ENCODE measurements at regions of chr1 and their contacts with region 1.

Region 1: GRCh38 chr1:155776404-155776803 is 80.6 kb downstream of the GON4L start:
- DNase-seq: no peak
- ATAC-seq: no peak
- H3K4me3 ChIP-seq: no peak overlapping the region
- H3K27ac ChIP-seq: no peak overlapping the region
- H3K4me1 ChIP-seq: no peaks in the 10 kb centered on the region
- H3K27me3 ChIP-seq: no peaks in the 10 kb centered on the region

Region 2: DNA sequence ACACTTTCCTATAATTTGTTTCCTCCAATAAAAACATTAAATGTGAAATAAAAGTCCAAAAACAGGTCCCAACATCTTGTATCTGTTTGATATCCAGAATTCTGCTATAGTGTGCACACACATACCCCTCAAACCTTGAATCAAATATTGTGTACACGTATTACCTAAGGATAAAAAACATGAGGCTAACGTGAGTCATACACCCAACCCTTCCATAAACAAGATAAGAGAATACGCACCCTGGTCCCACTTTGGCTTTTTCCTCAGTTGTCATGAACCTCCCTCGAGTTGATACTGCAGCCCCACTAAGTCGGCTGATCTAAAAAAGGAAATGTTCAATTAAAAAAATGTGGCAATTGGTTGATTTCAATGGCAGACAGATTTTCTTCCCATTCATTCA is 152.7 kb after region 1 on chr1:
- intact Hi-C with region 1: loop called in 1 of 2 experiments (anchors 10 kb)
- DNase-seq: no peak
- ATAC-seq: no peak
- H3K4me3 ChIP-seq: no peak overlapping the region
- H3K27ac ChIP-seq: no peak overlapping the region
- H3K4me1 ChIP-seq: no peaks in the 10 kb centered on the region
- H3K27me3 ChIP-seq: no peaks in the 10 kb centered on the region

Measured in aorta (tissue), 5 donors.